Activated CD4-positive, alpha-beta memory T cell treated with anti-CD3 and anti-CD28 coated beads for 36 hours (primary cell): ENCODE measurements at regions of chr14 and their contacts with region 1.

Region 1: GRCh38 chr14:50038398-50039119 is 77.8 kb downstream of the VCPKMT start:
- DNase-seq: peak; percentile 90
- H3K4me3 Mint-ChIP-seq: peak overlapping the region; percentile 74
- H3K27ac Mint-ChIP-seq: peak overlapping the region; percentile 99
- H3K4me1 Mint-ChIP-seq: peaks cover 64% of the 10 kb centered on the region
- H3K27me3 Mint-ChIP-seq: no peaks in the 10 kb centered on the region

Region 2: DNA sequence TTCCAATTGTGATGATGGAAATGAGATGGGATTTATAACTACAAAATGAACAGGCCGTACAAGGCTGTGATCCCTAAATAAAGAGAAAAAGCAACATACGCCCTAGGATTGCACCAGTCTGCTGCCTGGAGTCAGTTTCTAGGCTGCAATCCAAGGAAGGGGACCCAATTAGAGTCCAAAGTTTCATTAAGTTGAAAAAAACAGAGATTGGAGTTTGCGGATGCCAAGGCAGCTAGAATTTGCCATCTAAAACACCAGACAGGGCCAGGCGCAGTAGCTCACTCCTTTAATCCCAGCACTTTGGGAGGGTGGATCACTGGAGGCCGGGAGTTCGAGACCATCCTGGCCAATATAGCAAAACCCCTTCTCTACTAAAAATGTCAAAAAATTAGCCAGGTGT is 1113.4 kb before region 1 on chr14:
- CTCF ChIA-PET with region 1: no interaction called
- POLR2A ChIA-PET with region 1: no interaction called
- intact Hi-C with region 1: no loop called
- DNase-seq: no peak
- H3K4me3 Mint-ChIP-seq: no peak overlapping the region
- H3K27ac Mint-ChIP-seq: no peak overlapping the region
- H3K4me1 Mint-ChIP-seq: no peaks in the 10 kb centered on the region
- H3K27me3 Mint-ChIP-seq: no peaks in the 10 kb centered on the region

Region 3: DNA sequence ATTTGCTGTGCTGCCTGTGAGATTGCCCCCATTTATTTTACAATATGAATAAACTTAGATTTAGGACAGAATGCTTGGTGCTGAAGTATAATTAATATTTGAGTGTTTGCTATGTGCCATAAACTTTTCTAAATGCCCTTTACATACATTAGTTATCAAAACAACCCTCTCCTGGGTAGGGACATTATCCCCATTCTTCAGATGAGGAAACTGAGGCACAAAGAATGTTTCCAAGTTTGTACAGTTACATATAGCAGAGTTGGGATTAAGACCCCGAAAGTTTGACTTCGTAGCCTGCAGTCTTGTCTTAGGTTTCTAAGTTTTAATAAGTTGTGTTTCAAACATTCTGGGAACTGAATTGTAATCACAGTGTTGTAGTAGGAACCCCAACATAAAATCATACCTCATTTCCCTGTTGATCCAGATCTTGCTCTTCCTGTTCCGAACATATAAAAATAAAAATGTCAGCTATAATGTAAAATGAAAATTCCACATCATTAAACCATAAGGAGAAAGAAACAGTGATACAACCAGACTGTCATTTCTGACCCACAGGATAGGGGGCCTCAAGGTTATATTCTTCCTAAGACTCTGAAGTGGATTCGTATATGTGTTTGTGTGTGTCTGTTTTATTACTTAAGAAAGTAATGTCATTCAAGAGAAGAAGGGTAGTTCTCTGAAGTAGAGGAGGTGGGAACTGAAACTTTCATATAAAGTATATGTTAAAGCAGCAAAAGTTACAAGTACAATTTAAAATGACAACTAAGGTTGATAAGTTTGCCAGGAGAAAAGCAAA is 252.0 kb before region 1 on chr14:
- CTCF ChIA-PET with region 1: no interaction called
- POLR2A ChIA-PET with region 1: no interaction called
- intact Hi-C with region 1: no loop called
- DNase-seq: no peak
- H3K4me3 Mint-ChIP-seq: no peak overlapping the region
- H3K27ac Mint-ChIP-seq: peak overlapping the region; percentile 5
- H3K4me1 Mint-ChIP-seq: no peaks in the 10 kb centered on the region
- H3K27me3 Mint-ChIP-seq: no peaks in the 10 kb centered on the region

Region 4: DNA sequence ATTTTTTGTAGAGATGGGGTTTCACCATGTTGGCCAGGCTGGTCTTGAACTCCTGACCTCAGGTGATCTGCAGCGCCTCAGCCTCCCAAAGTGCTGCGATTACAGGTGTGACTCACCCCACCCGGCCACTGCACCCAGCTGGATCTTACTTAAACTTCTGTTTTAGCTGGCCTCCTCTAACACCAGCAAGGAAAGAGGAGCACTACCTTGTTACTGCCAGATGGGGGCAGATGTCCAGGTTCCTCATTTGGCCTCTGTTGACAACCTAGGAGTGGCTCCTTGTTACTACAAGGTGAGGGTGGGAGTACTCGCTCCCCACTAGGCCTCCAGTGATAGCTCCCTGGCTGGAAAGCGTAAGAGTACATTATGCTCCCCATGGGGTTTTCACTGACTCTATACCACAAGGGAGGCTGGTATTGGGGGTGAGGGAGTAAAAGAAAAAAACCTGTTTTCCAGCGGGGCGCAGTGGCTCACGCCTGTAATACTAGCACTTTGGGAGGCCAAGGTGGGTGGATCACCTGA is 158.8 kb before region 1 on chr14:
- CTCF ChIA-PET with region 1: interaction called, 7 read pairs
- POLR2A ChIA-PET with region 1: interaction called, 17 read pairs
- intact Hi-C with region 1: no loop called
- DNase-seq: peak; percentile 87
- H3K4me3 Mint-ChIP-seq: peak overlapping the region; percentile 12
- H3K27ac Mint-ChIP-seq: peak overlapping the region; percentile 62
- H3K4me1 Mint-ChIP-seq: peaks cover 35% of the 10 kb centered on the region
- H3K27me3 Mint-ChIP-seq: no peaks in the 10 kb centered on the region

Region 5: GRCh38 chr14:49940808-49941421 is 97.6 kb before region 1 on chr14:
- CTCF ChIA-PET with region 1: no interaction called
- POLR2A ChIA-PET with region 1: no interaction called
- intact Hi-C with region 1: no loop called
- DNase-seq: no peak
- H3K4me3 Mint-ChIP-seq: no peak overlapping the region
- H3K27ac Mint-ChIP-seq: peak overlapping the region; percentile 71
- H3K4me1 Mint-ChIP-seq: peaks cover 55% of the 10 kb centered on the region
- H3K27me3 Mint-ChIP-seq: no peaks in the 10 kb centered on the region

Region 6: DNA sequence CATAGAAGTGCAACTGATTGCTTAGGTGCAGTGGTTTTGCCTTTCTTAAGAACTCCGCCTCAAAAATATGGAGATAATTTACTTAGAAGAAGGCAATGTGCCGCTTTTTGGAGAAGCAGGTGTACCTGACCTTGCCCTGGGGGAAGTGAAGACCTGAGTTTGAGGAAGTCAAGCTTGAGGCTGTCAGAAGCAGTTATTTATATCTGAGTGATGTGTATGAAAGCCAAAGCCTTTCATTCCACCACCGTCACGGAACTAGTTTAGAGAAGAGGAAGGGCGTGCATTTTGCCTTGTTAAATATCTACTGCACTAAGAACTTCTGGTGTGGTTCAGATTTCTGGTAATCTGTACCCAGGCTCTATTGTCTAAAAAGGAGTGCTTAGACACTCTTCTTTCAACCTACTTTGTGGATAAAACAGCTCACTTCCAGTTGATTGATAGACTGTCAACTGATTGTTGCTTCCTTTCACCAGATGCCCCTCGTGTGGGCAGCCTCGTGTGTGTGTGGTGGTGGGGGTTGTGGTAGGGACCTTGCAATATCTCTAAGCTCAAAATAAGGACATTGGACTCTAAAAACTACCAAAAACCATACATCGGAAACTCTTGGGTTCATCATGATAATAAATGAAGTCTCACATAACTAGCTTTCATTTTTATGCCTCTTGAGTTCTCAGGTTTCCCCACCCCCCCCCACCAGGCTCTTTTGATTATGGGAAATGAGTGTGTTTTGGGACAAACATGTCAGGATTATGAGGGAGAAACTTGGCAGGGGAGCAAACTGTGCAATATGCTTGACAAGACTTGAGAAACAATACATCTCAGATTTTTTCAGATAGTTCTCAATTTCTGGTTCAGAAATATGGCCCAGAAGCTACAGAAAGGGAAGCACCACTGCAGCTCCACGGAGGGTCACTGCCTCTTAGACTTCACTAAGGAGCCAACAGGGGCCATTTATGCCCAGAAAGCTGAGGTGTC is 67.1 kb before region 1 on chr14:
- CTCF ChIA-PET with region 1: interaction called, 13 read pairs
- POLR2A ChIA-PET with region 1: interaction called, 47 read pairs
- intact Hi-C with region 1: loop called (anchors 1 kb)
- DNase-seq: peak; percentile 78
- H3K4me3 Mint-ChIP-seq: peak overlapping the region; percentile 62
- H3K27ac Mint-ChIP-seq: peak overlapping the region; percentile 95
- H3K4me1 Mint-ChIP-seq: peaks cover 61% of the 10 kb centered on the region
- H3K27me3 Mint-ChIP-seq: no peaks in the 10 kb centered on the region

Region 7: GRCh38 chr14:50023671-50024490 is 14.7 kb before region 1 on chr14:
- CTCF ChIA-PET with region 1: interaction called, 8 read pairs
- POLR2A ChIA-PET with region 1: interaction called, 24 read pairs
- intact Hi-C with region 1: loop called (anchors 1 kb)
- DNase-seq: no peak
- H3K4me3 Mint-ChIP-seq: no peak overlapping the region
- H3K27ac Mint-ChIP-seq: peak overlapping the region; percentile 31
- H3K4me1 Mint-ChIP-seq: peaks cover 43% of the 10 kb centered on the region
- H3K27me3 Mint-ChIP-seq: no peaks in the 10 kb centered on the region

Region 8: DNA sequence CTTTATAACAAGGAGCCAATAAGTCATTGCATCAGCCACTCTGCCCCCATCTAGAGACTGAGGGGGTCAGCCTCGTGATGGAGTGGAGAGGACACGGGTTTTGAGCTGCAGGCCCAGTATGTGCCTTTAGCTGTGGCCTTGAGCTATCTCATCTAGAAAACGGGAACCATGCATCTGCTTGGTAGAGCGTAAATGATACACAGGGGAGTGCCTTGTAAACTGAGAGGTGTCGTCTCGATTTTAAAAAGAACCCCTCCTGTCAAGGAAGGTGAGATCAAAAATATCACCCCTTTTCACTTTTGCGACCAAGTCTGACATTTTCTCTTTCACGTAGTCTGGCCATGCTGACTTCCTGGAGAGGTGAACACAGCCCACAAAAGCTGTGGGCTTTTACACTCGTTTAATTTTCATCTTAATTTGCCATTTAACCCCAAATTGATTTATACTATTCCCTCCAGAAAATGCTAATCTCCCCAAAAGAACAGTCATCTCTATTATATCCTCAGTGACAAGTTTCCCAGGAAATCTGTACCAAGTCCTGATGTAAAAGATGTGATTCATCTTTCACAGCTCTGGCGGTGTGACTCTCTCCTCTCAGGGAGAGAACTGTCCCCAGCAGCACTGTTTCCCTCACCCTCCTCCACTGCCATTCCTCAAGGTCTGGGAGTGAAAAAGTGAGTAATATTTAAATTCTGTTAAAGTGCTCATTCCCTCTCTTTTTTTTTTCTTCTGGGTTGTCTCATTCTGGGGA is 47.2 kb after region 1 on chr14:
- CTCF ChIA-PET with region 1: interaction called, 27 read pairs
- POLR2A ChIA-PET with region 1: interaction called, 104 read pairs
- intact Hi-C with region 1: loop called (anchors 1 kb)
- DNase-seq: peak; percentile 70
- H3K4me3 Mint-ChIP-seq: peak overlapping the region; percentile 30
- H3K27ac Mint-ChIP-seq: peak overlapping the region; percentile 91
- H3K4me1 Mint-ChIP-seq: peaks cover 92% of the 10 kb centered on the region
- H3K27me3 Mint-ChIP-seq: no peaks in the 10 kb centered on the region

Region 9: GRCh38 chr14:50231475-50232275 is 193.1 kb after region 1 on chr14 and contains the start of gene SOS2:
- CTCF ChIA-PET with region 1: no interaction called
- POLR2A ChIA-PET with region 1: interaction called, 3 read pairs
- intact Hi-C with region 1: loop called (anchors 2 kb)
- DNase-seq: peak; percentile 86
- H3K4me3 Mint-ChIP-seq: peak within 1 kb of the TSS; percentile 78
- H3K27ac Mint-ChIP-seq: peak within 1 kb of the TSS; percentile 85
- H3K4me1 Mint-ChIP-seq: peaks cover 40% of the 10 kb centered on the region
- H3K27me3 Mint-ChIP-seq: no peaks in the 10 kb centered on the region
- total RNA-seq, gene SOS2: 19.6 to 20.9 TPM